Cardiac septum (tissue), 1 donor: ENCODE measurements at regions of chr12 and their contacts with region 1.

Region 1: GRCh38 chr12:124655698-124656516 is 88.5 kb upstream of the NCOR2 start:
- DNase-seq: peak; percentile 89

Region 2: GRCh38 chr12:124588751-124589267 is 67.1 kb before region 1 on chr12:
- intact Hi-C with region 1: loop called (anchors 5 kb)
- DNase-seq: peak; percentile 84

Region 3: GRCh38 chr12:124667506-124668326 is 11.8 kb after region 1 on chr12:
- intact Hi-C with region 1: no loop called
- DNase-seq: no peak

Region 4: DNA sequence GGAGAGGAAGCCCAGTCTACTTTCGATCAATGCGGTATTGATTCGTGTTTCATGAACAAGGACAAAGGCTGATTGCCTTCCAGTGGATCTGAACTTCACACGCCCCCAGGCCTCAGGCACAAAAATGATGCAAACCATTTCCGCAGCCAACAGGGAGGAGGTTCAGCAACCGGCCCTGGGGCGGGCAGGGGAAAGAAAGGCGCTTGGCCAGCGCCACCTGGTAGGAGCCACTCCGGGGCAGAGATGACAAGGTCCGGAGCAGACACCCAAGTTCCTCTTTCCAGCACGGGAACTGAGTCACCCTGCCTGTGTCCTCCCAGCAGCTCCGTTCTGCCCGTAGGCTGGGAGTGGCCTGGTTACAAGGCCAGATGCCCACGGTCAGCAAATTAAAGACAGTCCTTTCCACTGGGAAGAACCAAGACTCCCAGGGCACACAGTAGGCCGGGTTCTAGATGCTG is 71.4 kb after region 1 on chr12:
- intact Hi-C with region 1: no loop called
- DNase-seq: peak; percentile 89